ENCODE measurements at regions of chr5 and their contacts with region 1.

Region 1: DNA sequence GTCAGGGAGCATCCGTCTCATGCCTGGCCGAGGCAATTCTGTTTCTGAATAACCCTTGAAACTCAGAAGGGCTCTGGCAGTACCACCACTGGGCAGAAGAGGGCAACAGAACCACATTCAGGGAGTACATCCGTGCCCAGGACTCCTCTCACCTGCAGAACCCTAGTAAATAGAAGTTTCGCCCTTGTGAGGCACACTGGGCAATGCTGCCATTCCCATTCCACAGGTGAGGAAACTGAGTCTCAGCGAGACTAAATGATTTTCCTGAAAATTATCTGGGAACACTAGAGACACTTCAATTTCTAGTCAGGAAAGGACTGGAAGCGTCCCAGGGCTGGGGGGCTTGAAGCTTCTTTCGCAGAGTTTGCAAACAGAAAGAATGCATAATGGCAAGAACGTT is 74.7 kb downstream of the FGF1 start:
- DNase-seq: peak; percentile 48 to 54 (median 48)
- H3K4me3 ChIP-seq: no peak overlapping the region
- H3K4me3 Mint-ChIP-seq: no peak overlapping the region
- H3K27ac ChIP-seq: no peak overlapping the region
- H3K27ac Mint-ChIP-seq: no peak overlapping the region
- H3K4me1 ChIP-seq: peaks cover 5% of the 10 kb centered on the region
- H3K4me1 Mint-ChIP-seq: peaks cover 0 to 6% (median 3%) of the 10 kb centered on the region in 4 donors
- H3K27me3 ChIP-seq: no peaks in the 10 kb centered on the region
- H3K27me3 Mint-ChIP-seq: peaks cover 9 to 20% of the 10 kb centered on the region in 2 donors

Region 2: GRCh38 chr5:142699184-142699720 is 88.1 kb after region 1 on chr5:
- CTCF ChIA-PET with region 1: interaction called, 14 read pairs
- POLR2A ChIA-PET with region 1: no interaction called
- intact Hi-C with region 1: loop called (anchors 1 kb)
- DNase-seq: peak; percentile 68 to 73 (median 72)
- H3K4me3 ChIP-seq: no peak overlapping the region
- H3K4me3 Mint-ChIP-seq: no peak overlapping the region
- H3K27ac ChIP-seq: no peak overlapping the region
- H3K27ac Mint-ChIP-seq: no peak overlapping the region
- H3K4me1 ChIP-seq: no peaks in the 10 kb centered on the region
- H3K4me1 Mint-ChIP-seq: peaks cover 0 to 2% (median under 1%) of the 10 kb centered on the region in 4 donors
- H3K27me3 ChIP-seq: no peaks in the 10 kb centered on the region
- H3K27me3 Mint-ChIP-seq: peaks cover 2% of the 10 kb centered on the region in 2 donors

Region 3: GRCh38 chr5:142800776-142801494 is 189.8 kb after region 1 on chr5:
- CTCF ChIA-PET with region 1: no interaction called
- POLR2A ChIA-PET with region 1: no interaction called
- intact Hi-C with region 1: no loop called
- DNase-seq: peak; percentile 47 to 58 (median 54)
- H3K4me3 ChIP-seq: no peak overlapping the region
- H3K4me3 Mint-ChIP-seq: peak overlapping the region; percentile 27 to 83 (median 74)
- H3K27ac ChIP-seq: peak overlapping the region; percentile 6
- H3K27ac Mint-ChIP-seq: peak overlapping the region; percentile 71 to 96 (median 93)
- H3K4me1 ChIP-seq: peaks cover 51% of the 10 kb centered on the region
- H3K4me1 Mint-ChIP-seq: peaks cover 36 to 64% (median 50%) of the 10 kb centered on the region in 4 donors
- H3K27me3 ChIP-seq: no peaks in the 10 kb centered on the region
- H3K27me3 Mint-ChIP-seq: no peaks in the 10 kb centered on the region

Region 4: DNA sequence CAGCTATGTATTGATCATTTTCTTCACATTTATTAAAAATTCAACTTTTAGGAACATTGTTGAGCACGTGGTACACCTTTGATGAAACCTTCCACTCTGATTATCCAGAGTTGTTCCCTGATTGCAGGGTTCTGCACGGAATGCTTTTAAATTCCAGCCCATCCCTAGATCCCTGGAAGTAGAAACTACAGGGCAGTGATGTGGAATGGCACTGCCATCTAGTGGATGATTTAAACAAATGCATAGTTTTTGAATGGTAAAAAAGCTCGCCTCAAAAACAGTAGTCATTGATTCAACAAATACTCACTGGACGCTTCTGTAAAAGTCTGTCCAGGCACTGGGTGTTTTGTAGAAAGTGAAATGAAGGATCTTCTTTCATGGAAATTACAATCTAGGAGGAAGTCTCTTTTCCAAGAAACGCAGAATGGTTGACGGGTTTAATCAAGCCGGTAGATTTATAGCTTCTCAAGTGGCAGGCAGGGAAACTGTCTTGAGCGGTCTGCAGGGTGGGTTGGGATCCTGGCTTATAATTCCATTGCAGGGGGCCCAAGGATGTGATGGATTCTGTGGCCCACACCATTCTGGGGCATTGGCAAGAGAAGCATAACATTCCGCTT is 277.4 kb after region 1 on chr5:
- CTCF ChIA-PET with region 1: no interaction called
- POLR2A ChIA-PET with region 1: no interaction called
- intact Hi-C with region 1: loop called (anchors 2 kb)
- DNase-seq: peak in 4 of 5 donors; percentile 13 to 26 (median 20)
- H3K4me3 ChIP-seq: no peak overlapping the region
- H3K4me3 Mint-ChIP-seq: no peak overlapping the region
- H3K27ac ChIP-seq: no peak overlapping the region
- H3K27ac Mint-ChIP-seq: peak overlapping the region in 1 of 7 donors; percentile 39
- H3K4me1 ChIP-seq: no peaks in the 10 kb centered on the region
- H3K4me1 Mint-ChIP-seq: peaks cover 0 to 4% (median under 1%) of the 10 kb centered on the region in 4 donors
- H3K27me3 ChIP-seq: no peaks in the 10 kb centered on the region
- H3K27me3 Mint-ChIP-seq: no peaks in the 10 kb centered on the region